ENCODE measurements at regions of chr7 and their contacts with region 1.

Region 1: GRCh38 chr7:66946545-66946944 is 25.5 kb downstream of the TMEM248 start:
- DNase-seq: no peak
- ATAC-seq: no peak
- H3K4me3 ChIP-seq: no peak overlapping the region
- H3K4me3 Mint-ChIP-seq: no peak overlapping the region
- H3K27ac ChIP-seq: no peak overlapping the region
- H3K27ac Mint-ChIP-seq: no peak overlapping the region
- H3K4me1 ChIP-seq: no peaks in the 10 kb centered on the region
- H3K4me1 Mint-ChIP-seq: no peaks in the 10 kb centered on the region
- H3K27me3 ChIP-seq: no peaks in the 10 kb centered on the region
- H3K27me3 Mint-ChIP-seq: no peaks in the 10 kb centered on the region
- CTCF ChIP-seq: no peak

Region 2: DNA sequence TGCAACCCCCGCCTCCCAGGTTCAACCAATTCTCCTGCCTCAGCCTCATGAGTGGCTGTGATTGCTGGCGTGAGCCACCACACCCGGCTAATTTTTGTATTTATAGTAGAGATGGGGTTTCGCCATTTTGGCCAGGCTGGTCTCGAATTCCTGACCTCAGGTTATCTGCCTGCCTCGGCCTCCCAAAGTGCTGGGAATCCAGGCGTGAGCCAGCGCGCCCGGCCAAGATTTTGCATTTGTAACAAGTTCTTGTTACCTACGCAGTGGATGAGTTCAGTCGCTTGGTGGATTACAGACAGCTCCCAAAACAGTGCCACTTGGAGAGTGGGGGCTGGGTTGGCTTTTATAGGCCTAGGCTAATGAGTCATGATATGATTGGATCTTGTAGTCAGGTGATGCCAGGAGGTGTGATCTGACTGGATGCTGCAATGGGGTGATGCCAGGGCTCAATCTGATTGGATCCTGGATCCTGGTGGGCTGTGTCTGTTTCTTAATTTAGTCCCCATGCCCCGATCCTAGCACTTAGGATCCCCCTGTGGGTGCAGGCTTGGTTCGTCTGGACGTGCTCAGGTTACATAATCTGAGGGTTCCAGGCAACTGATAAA is 28.5 kb after region 1 on chr7:
- CTCF ChIA-PET with region 1: no interaction called
- POLR2A ChIA-PET with region 1: no interaction called
- intact Hi-C with region 1: loop called in 1 of 2 experiments (anchors 5 kb)
- DNase-seq: no peak
- ATAC-seq: no peak
- H3K4me3 ChIP-seq: no peak overlapping the region
- H3K4me3 Mint-ChIP-seq: no peak overlapping the region
- H3K27ac ChIP-seq: no peak overlapping the region
- H3K27ac Mint-ChIP-seq: no peak overlapping the region
- H3K4me1 ChIP-seq: no peaks in the 10 kb centered on the region
- H3K4me1 Mint-ChIP-seq: no peaks in the 10 kb centered on the region
- H3K27me3 ChIP-seq: no peaks in the 10 kb centered on the region
- H3K27me3 Mint-ChIP-seq: no peaks in the 10 kb centered on the region
- CTCF ChIP-seq: no peak

Measured in CD8-positive, alpha-beta T cell (primary cell).